Caco-2 (cell line): ENCODE measurements at regions of chr6 and their contacts with region 1.

Region 1: DNA sequence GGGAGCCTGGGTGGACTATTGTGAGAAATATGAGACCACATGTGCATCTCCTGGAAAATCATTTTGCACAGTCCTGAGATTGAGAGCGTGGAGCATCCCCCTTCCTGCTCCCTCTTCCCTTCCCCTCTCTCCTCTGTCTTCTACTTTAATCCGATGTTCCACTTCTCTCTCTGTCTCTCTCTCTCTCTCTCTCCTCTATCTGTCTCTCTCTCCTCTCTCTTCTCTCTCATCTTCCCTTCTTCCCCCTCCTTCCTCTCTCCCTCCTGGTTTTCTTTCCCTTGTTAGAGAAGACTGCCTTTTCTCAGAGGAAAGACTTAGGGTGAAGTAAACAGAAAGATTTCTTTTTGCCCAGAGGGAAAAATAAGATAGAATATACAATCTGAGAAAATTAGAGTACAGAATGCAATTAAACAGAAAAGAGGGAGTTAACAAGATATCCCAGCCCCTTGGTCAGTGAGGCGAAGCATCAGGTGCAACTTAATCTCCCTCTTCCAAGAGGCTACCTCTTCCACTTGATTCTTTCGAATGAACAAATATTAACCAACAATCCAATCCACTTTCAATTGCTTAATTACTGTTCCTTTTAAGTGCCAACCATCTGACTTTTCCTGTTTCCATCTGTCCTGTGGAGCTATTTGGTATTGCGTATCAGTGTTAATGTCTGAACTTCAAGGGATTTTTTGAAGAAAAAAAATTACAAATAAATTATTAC is 14.6 kb downstream of the KHDC1 start:
- DNase-seq: no peak
- H3K4me3 ChIP-seq: no peak overlapping the region
- H3K4me3 Mint-ChIP-seq: no peak overlapping the region
- H3K27ac Mint-ChIP-seq: no peak overlapping the region
- H3K4me1 ChIP-seq: no peaks in the 10 kb centered on the region
- H3K4me1 Mint-ChIP-seq: no peaks in the 10 kb centered on the region
- H3K27me3 ChIP-seq: no peaks in the 10 kb centered on the region
- H3K27me3 Mint-ChIP-seq: peaks cover 4% of the 10 kb centered on the region
- CTCF ChIP-seq: no peak

Region 2: GRCh38 chr6:73262671-73263569 is 14.6 kb after region 1 on chr6 and contains the start of gene KHDC1:
- CTCF ChIA-PET with region 1: interaction called, 12 read pairs
- POLR2A ChIA-PET with region 1: no interaction called
- intact Hi-C with region 1: no loop called
- DNase-seq: peak; percentile 62 to 66
- H3K4me3 ChIP-seq: peak within 1 kb of the TSS; percentile 78
- H3K4me3 Mint-ChIP-seq: peak within 1 kb of the TSS; percentile 76
- H3K27ac Mint-ChIP-seq: peak within 1 kb of the TSS; percentile 5
- H3K4me1 ChIP-seq: peaks cover 16% of the 10 kb centered on the region
- H3K4me1 Mint-ChIP-seq: peaks cover 7% of the 10 kb centered on the region
- H3K27me3 ChIP-seq: no peaks in the 10 kb centered on the region
- H3K27me3 Mint-ChIP-seq: no peaks in the 10 kb centered on the region
- CTCF ChIP-seq: no peak
- total RNA-seq, gene KHDC1: 8.1 and 8.6 TPM in 2 replicates